ENCODE measurements at regions of chr4 and their contacts with region 1.

Region 1: GRCh38 chr4:118772081-118772766 is 63.7 kb downstream of the SEC24D start:
- DNase-seq: no peak
- ATAC-seq: peak; percentile 63 to 89 (median 80)
- H3K4me3 ChIP-seq: peak overlapping the region in 5 of 10 donors; percentile 13 to 25 (median 23)
- H3K27ac ChIP-seq: peak overlapping the region; percentile 6 to 81 (median 55)
- H3K4me1 ChIP-seq: peaks cover 5 to 85% (median 67%) of the 10 kb centered on the region in 9 donors
- H3K27me3 ChIP-seq: no peaks in the 10 kb centered on the region
- CTCF ChIP-seq: peak; percentile 28 to 78 (median 64)

Region 2: DNA sequence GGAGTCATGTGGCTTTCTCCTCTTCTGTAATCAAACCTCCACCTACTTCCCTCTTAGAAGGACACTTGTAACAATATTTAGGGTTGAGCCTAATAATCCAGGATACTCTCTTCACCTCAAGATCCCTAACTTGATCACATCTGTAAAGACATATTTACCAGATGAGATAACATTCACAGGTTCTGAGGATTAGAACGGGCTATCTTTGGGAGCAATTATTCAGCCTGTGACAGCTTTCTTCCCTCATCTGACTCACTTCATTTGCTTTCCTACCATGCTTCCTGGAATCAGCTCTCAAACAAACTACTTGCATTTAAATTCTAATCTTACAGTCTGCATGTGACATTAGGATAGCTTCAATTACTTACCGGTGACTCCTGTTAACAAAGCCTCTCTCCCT is 871.4 kb before region 1 on chr4:
- intact Hi-C with region 1: no loop called
- DNase-seq: no peak
- ATAC-seq: no peak
- H3K4me3 ChIP-seq: no peak overlapping the region
- H3K27ac ChIP-seq: no peak overlapping the region
- H3K4me1 ChIP-seq: no peaks in the 10 kb centered on the region
- H3K27me3 ChIP-seq: no peaks in the 10 kb centered on the region
- CTCF ChIP-seq: no peak

Region 3: DNA sequence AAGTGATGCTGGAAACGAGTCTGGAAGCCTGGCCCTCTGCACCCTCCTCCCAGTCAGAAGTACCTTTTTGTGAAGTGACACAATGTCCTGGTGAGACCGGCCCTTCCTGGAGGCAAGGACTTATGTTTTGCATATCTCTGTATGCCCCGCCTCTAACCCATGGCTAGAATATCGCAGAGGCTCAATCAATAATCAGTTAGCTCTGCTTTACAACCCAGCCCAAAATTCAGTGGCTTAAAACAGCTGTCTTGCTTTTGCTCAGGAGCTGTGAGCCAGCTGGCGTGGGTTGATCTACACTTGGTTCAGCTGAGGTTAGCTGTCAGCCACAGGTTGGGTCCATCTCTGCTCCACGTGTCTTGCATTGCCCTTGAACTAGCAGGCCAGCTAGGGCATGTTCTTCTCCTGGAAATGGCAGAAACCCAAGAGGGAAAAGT is 185.8 kb before region 1 on chr4:
- intact Hi-C with region 1: no loop called
- DNase-seq: peak; percentile 42
- ATAC-seq: peak; percentile 61 to 85 (median 72)
- H3K4me3 ChIP-seq: peak overlapping the region in 1 of 10 donors; percentile 13
- H3K27ac ChIP-seq: peak overlapping the region in 9 of 10 donors; percentile 39 to 70 (median 52)
- H3K4me1 ChIP-seq: peaks cover 0 to 19% (median 9%) of the 10 kb centered on the region in 9 donors
- H3K27me3 ChIP-seq: peaks cover 0 to 25% (median 0%) of the 10 kb centered on the region in 7 donors
- CTCF ChIP-seq: no peak

Region 4: GRCh38 chr4:118740869-118741268 is 31.4 kb before region 1 on chr4:
- intact Hi-C with region 1: loop called in 2 of 10 experiments (anchors 1 to 5 kb)
- DNase-seq: no peak
- ATAC-seq: peak in 2 of 8 donors; percentile 36 to 57
- H3K4me3 ChIP-seq: peak overlapping the region in 5 of 10 donors; percentile 4 to 20 (median 15)
- H3K27ac ChIP-seq: peak overlapping the region in 9 of 10 donors; percentile 11 to 82 (median 64)
- H3K4me1 ChIP-seq: peaks cover 3 to 32% (median 20%) of the 10 kb centered on the region in 9 donors
- H3K27me3 ChIP-seq: no peaks in the 10 kb centered on the region
- CTCF ChIP-seq: peak; percentile 21 to 70 (median 54)

Region 5: DNA sequence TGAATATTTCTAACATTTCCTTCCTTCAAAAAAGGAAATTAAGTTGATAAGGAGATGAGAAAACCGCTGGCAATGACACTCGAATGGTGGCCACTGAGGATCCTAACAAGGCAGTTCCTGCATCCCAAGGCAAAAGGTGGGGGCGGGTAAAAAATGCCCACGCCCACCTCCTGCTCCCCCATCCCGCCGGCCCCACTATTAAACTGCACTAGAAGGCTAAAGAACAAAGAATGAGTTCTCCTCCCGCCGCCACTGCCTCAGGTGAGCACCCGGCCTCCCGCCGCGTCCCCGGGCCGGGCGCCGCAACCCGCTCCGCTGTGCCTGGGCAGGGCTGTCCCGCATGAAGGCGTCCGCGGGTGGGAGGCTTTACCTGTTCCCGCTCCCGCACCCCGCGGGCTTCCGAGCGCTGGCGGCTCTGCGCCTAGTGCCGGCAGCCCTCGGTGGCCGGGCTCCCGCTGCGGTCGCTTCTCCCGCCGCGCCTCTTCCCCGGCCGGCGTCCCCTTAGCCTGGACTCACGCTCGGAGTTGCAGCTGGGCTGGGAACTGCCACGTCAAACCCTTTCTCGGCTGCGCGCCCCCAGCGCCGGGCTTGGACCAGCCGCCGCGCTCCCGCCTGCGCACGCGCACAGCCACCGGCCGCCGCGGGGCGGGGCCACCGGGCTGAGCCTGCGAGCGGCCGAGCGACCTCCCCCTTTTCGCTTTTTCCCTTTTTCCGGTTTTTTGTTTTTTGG is 63.5 kb after region 1 on chr4 and contains the start of gene SEC24D:
- intact Hi-C with region 1: loop called in 2 of 10 experiments (anchors 5 to 10 kb)
- DNase-seq: peak; percentile 89 to 92
- ATAC-seq: peak; percentile 91 to 98 (median 96)
- H3K4me3 ChIP-seq: peak within 1 kb of the TSS; percentile 63 to 99 (median 91)
- H3K27ac ChIP-seq: peak within 1 kb of the TSS; percentile 72 to 99 (median 95)
- H3K4me1 ChIP-seq: peaks cover 0 to 47% (median 26%) of the 10 kb centered on the region in 9 donors
- H3K27me3 ChIP-seq: no peaks in the 10 kb centered on the region
- CTCF ChIP-seq: peak in 4 of 9 donors; percentile 5 to 35 (median 17)
- total RNA-seq, gene SEC24D: 7.8 to 24.4 (median 12.1) TPM

Region 6: GRCh38 chr4:118888666-118889311 is 116.6 kb after region 1 on chr4 and contains the start of gene SYNPO2:
- intact Hi-C with region 1: loop called (anchors 2 to 10 kb)
- DNase-seq: peak; percentile 81 to 84
- ATAC-seq: peak; percentile 84 to 94 (median 90)
- H3K4me3 ChIP-seq: peak within 1 kb of the TSS; percentile 34 to 74 (median 66)
- H3K27ac ChIP-seq: peak within 1 kb of the TSS; percentile 78 to 93 (median 85)
- H3K4me1 ChIP-seq: peaks cover 0 to 19% (median 15%) of the 10 kb centered on the region in 9 donors
- H3K27me3 ChIP-seq: peaks cover 0 to 19% (median 0%) of the 10 kb centered on the region in 7 donors
- CTCF ChIP-seq: no peak
- total RNA-seq, gene SYNPO2: 197 to 405 (median 267) TPM

Region 7: DNA sequence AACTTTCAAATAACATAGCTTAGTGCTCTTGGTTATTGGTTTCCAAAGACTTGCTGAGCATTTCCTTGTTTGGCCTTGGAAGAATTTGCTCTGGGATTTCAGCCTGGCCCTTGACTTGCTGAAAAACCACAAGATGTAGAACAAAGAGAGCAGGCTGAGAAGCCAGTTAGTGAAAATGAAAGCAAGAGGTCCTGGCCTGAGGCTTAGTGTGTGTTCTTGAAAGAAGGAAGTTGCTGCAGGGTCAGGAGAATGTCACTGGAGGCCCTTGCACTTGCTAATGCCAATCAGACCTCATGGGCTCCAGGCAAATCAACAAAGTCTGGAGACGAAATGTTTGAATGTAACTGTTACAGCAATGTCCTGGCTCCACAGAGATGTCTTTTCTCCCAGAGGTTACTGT is 195.8 kb after region 1 on chr4:
- intact Hi-C with region 1: loop called (anchors 1 to 10 kb)
- DNase-seq: peak in 1 of 2 donors; percentile 58
- ATAC-seq: peak; percentile 70 to 85 (median 77)
- H3K4me3 ChIP-seq: peak overlapping the region in 3 of 10 donors; percentile 6 to 19 (median 10)
- H3K27ac ChIP-seq: peak overlapping the region; percentile 14 to 83 (median 75)
- H3K4me1 ChIP-seq: peaks cover 22 to 91% (median 60%) of the 10 kb centered on the region in 9 donors
- H3K27me3 ChIP-seq: no peaks in the 10 kb centered on the region
- CTCF ChIP-seq: no peak

Region 8: GRCh38 chr4:119041951-119042560 is 269.8 kb after region 1 on chr4:
- intact Hi-C with region 1: loop called in 1 of 10 experiments (anchors 10 kb)
- DNase-seq: peak in 1 of 2 donors; percentile 71
- ATAC-seq: peak; percentile 49 to 80 (median 64)
- H3K4me3 ChIP-seq: no peak overlapping the region
- H3K27ac ChIP-seq: peak overlapping the region in 8 of 10 donors; percentile 51 to 72 (median 63)
- H3K4me1 ChIP-seq: peaks cover 5 to 91% (median 75%) of the 10 kb centered on the region in 9 donors
- H3K27me3 ChIP-seq: no peaks in the 10 kb centered on the region
- CTCF ChIP-seq: peak; percentile 47 to 82 (median 66)

Measured in heart right ventricle (tissue), 16 donors.